Activated CD8-positive, alpha-beta memory T cell treated with anti-CD3 and anti-CD28 coated beads, Interleukin-2, amount 10 ng/mL, durations not matched to agents 7 days and 5 days (primary cell): ENCODE measurements at regions of chr1 and their contacts with region 1.

Region 1: DNA sequence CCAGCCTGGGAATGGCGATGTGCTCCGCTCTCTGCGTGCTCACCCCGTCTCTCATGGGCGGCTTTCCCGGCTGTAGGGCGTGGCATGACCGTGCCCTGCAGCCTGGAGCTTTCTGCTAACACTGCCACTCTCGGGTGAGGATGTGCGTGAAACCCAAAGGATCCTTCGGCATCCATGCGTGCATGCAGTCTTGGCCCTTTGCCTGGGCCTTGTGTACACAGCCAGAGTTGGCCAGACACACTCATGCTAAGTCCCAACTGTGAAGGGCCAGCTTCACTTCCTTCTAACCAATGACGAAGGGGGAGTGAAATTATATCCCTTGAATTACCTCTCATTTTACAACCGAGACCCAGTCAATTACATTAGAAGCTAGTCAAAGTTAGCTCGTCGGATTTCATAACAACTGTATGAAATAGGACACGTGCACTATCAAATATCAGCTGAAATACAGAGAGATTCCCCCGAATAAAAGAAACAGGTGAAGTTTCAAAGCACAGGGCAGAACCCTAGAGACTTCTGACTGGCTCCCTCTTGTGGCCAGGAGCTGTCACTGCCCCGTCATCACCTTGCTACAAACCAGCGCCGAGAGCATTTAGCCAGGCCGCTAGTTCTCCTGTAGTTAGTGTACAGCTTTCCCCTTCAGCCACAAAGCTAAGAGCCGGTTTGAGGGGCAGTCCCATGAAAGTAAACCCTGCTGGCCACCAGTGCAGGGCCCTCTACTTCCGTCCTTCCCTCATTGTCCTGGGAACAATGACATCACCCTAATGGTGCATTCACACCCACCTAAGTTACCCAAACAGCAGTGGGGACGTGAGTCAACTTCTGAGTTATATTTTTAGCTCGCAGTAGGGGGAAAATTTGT is 63.4 kb upstream of the COA6 start:
- DNase-seq: peak; percentile 84
- ATAC-seq: peak; percentile 89
- H3K4me3 Mint-ChIP-seq: no peak overlapping the region
- H3K27ac Mint-ChIP-seq: no peak overlapping the region
- H3K4me1 Mint-ChIP-seq: peaks cover 35% of the 10 kb centered on the region
- H3K27me3 Mint-ChIP-seq: no peaks in the 10 kb centered on the region

Region 2: DNA sequence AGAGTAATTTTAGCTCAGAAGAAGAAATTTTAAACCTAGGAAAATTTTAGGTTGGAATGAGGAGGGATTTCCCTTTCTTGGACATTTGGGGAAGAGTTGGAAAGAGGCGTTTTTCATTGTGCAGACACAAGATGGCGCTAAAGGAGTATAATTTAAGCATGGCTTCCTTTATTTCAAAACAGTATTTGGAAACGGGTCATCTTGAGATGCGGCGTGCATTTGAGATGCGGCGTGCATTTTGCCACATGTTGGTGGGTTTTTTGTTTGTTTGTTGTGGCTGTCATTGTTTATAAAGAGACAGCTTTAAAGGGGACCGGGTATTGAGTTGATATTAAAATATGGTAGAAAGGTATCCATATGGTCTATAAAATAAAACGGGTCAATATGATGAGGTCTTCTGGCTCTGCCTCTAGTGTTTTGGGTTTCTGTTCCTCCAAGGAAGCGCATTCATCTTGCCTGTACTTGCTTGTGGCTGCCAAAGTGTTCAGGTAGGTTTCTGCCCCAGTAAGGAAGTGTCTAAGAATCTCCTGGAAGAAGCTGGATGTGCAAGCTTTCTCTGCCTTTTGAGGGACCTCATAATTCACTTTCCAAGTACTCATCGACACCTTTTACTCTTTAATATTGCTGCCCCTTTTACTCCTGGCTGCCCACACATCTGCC is 195.1 kb before region 1 on chr1:
- CTCF ChIA-PET with region 1: interaction called, 12 read pairs
- DNase-seq: peak; percentile 54
- ATAC-seq: peak; percentile 42
- H3K4me3 Mint-ChIP-seq: peak overlapping the region; percentile 47
- H3K27ac Mint-ChIP-seq: no peak overlapping the region
- H3K4me1 Mint-ChIP-seq: peaks cover 8% of the 10 kb centered on the region
- H3K27me3 Mint-ChIP-seq: peaks cover 37% of the 10 kb centered on the region

Region 3: GRCh38 chr1:234125283-234125682 is 184.5 kb before region 1 on chr1:
- CTCF ChIA-PET with region 1: interaction called, 15 read pairs
- DNase-seq: peak; percentile 66
- ATAC-seq: peak; percentile 64
- H3K4me3 Mint-ChIP-seq: no peak overlapping the region
- H3K27ac Mint-ChIP-seq: no peak overlapping the region
- H3K4me1 Mint-ChIP-seq: no peaks in the 10 kb centered on the region
- H3K27me3 Mint-ChIP-seq: peaks cover 36% of the 10 kb centered on the region

Region 4: GRCh38 chr1:234212764-234213657 is 96.8 kb before region 1 on chr1:
- CTCF ChIA-PET with region 1: interaction called, 199 read pairs
- DNase-seq: peak; percentile 63
- ATAC-seq: peak; percentile 60
- H3K4me3 Mint-ChIP-seq: peak overlapping the region; percentile 73
- H3K27ac Mint-ChIP-seq: peak overlapping the region; percentile 66
- H3K4me1 Mint-ChIP-seq: peaks cover 39% of the 10 kb centered on the region
- H3K27me3 Mint-ChIP-seq: peaks cover 12% of the 10 kb centered on the region

Region 5: DNA sequence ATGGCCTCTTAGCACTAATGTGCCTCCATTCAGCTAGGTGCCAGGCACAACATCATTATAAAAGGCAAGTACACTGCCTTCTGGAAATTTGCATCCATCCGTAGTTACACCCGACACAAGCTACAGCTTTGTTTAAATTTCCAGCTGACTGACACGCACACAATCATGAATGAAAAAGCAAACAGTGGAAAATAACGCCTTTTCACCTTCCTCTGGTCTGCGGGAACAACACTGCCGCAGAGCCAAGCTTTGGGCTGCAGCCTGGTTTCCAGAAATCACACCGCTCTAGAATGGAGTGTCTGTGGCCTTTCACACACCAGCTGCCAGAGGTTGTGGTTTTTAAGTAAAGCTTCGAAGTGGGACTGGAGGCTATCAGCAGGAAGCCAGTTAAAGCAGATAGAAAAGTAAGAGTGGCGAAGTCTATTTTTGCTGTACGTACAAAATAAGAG is 79.4 kb before region 1 on chr1:
- CTCF ChIA-PET with region 1: interaction called, 14 read pairs
- DNase-seq: peak; percentile 72
- ATAC-seq: peak; percentile 81
- H3K4me3 Mint-ChIP-seq: peak overlapping the region; percentile 14
- H3K27ac Mint-ChIP-seq: peak overlapping the region; percentile 57
- H3K4me1 Mint-ChIP-seq: peaks cover 41% of the 10 kb centered on the region
- H3K27me3 Mint-ChIP-seq: peaks cover 35% of the 10 kb centered on the region

Region 6: GRCh38 chr1:234235434-234235881 is 74.4 kb before region 1 on chr1:
- CTCF ChIA-PET with region 1: interaction called, 14 read pairs
- DNase-seq: peak; percentile 28
- ATAC-seq: no peak
- H3K4me3 Mint-ChIP-seq: no peak overlapping the region
- H3K27ac Mint-ChIP-seq: no peak overlapping the region
- H3K4me1 Mint-ChIP-seq: peaks cover 29% of the 10 kb centered on the region
- H3K27me3 Mint-ChIP-seq: peaks cover 17% of the 10 kb centered on the region

Region 7: GRCh38 chr1:234270093-234270492 is 39.7 kb before region 1 on chr1:
- CTCF ChIA-PET with region 1: no interaction called
- DNase-seq: no peak
- ATAC-seq: no peak
- H3K4me3 Mint-ChIP-seq: no peak overlapping the region
- H3K27ac Mint-ChIP-seq: peak overlapping the region; percentile 37
- H3K4me1 Mint-ChIP-seq: peaks cover 36% of the 10 kb centered on the region
- H3K27me3 Mint-ChIP-seq: peaks cover 9% of the 10 kb centered on the region

Region 8: DNA sequence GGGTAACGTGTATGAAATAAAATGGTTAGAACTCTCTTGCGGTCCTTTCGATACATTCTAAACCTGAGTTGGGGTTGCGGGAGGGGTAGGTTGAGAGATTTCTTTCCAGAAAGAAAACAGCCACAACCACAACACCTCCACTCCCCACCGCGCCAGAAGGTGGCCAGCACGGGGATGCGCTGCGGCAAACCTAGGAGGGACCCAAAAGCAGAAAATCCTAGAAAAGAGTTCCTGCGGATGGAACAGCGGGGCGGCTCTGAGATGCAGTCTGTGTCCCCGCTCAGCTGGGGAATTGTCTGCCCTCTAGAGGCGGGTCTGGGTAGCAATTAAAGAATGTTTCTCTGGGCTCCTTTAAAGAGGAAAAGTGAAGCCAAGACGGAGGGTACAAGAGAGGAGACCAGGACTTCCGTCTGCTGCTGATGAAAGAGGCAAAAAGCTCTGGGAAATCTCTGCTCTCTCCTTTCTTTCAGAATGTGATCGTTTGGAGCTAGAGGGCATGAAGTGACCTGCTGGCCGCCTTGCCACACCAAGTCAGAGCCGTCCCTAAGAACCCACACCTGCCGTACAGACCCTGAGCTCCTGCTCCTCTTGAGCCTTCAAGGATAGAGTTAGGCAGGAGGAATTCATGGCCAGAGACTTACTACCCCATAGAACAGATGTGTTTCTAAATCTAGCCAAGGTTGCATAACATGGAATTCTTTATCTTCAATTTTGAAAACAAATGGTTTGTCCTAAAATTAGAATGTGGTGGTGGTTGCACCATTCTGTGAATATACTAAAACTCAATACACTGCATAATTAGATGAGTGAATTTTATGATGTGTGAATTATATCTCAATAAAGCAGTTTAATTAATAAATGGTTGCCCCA is 16.9 kb after region 1 on chr1:
- CTCF ChIA-PET with region 1: interaction called, 62 read pairs
- DNase-seq: peak; percentile 77
- ATAC-seq: peak; percentile 94
- H3K4me3 Mint-ChIP-seq: peak overlapping the region; percentile 81
- H3K27ac Mint-ChIP-seq: peak overlapping the region; percentile 53
- H3K4me1 Mint-ChIP-seq: peaks cover 21% of the 10 kb centered on the region
- H3K27me3 Mint-ChIP-seq: peaks cover 13% of the 10 kb centered on the region